ENCODE measurements at regions of chr11 and their contacts with region 1.

Region 1: GRCh38 chr11:76744186-76745043 is 38.7 kb upstream of the TSKU start:
- DNase-seq: no peak
- H3K4me3 ChIP-seq: no peak overlapping the region
- H3K4me1 ChIP-seq: no peaks in the 10 kb centered on the region
- H3K27me3 ChIP-seq: no peaks in the 10 kb centered on the region

Region 2: DNA sequence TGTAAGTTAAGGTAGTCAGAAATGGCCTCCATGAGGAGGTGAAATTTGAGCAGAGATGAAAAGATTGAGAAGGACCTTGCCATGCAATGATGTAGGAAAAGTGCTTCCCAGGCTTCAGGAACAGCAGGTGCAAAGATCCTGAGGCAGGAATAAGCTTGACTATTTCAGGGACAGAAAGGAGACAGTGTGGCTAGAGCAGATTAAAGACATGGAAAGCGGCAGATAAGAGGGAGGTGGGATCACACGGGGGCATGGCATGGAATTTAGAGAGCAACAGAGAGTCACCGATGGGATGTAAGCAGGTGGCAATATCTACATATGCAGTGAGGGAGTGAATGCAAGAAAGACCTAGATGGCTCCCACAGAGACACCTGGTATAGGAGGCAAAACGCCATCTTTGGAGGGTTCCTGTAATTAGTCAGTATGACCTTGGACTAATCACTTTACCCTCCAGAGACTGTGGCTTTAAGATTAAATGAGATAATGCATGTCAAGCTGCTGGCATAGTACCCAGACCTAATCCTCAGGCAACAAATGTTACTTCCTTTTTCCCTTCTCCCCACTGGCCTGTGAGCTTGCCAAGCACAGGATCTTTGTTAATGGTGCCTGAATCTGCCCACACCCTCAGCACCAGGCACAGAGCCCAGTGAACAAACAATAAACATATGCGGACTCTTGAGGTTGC is 91.7 kb after region 1 on chr11:
- in situ Hi-C with region 1: no loop called
- DNase-seq: no peak
- H3K4me3 ChIP-seq: no peak overlapping the region
- H3K4me1 ChIP-seq: no peaks in the 10 kb centered on the region
- H3K27me3 ChIP-seq: peaks cover 29% of the 10 kb centered on the region

Region 3: GRCh38 chr11:77101052-77101537 is 356.7 kb after region 1 on chr11:
- in situ Hi-C with region 1: loop called (anchors 10 kb)
- DNase-seq: peak; percentile 6 to 47
- H3K4me3 ChIP-seq: no peak overlapping the region
- H3K4me1 ChIP-seq: no peaks in the 10 kb centered on the region
- H3K27me3 ChIP-seq: no peaks in the 10 kb centered on the region